Activated CD4-positive, alpha-beta memory T cell treated with anti-CD3 and anti-CD28 coated beads for 36 hours (primary cell): ENCODE measurements at regions of chr6 and their contacts with region 1.

Region 1: GRCh38 chr6:43053545-43054205 is at the start of gene CUL7:
- DNase-seq: peak; percentile 96
- H3K4me3 Mint-ChIP-seq: peak within 1 kb of the TSS; percentile 98
- H3K27ac Mint-ChIP-seq: peak within 1 kb of the TSS; percentile 95
- H3K4me1 Mint-ChIP-seq: peaks cover 44% of the 10 kb centered on the region
- H3K27me3 Mint-ChIP-seq: no peaks in the 10 kb centered on the region
- total RNA-seq, gene CUL7: 23.2 to 23.8 TPM

Region 2: GRCh38 chr6:42978839-42979522 is 74.7 kb before region 1 on chr6 and contains the start of gene PEX6:
- CTCF ChIA-PET with region 1: no interaction called
- POLR2A ChIA-PET with region 1: interaction called, 4 read pairs
- intact Hi-C with region 1: loop called (anchors 1 kb)
- DNase-seq: peak; percentile 97
- H3K4me3 Mint-ChIP-seq: peak within 1 kb of the TSS; percentile 94
- H3K27ac Mint-ChIP-seq: peak within 1 kb of the TSS; percentile 98
- H3K4me1 Mint-ChIP-seq: peaks cover 56% of the 10 kb centered on the region
- H3K27me3 Mint-ChIP-seq: no peaks in the 10 kb centered on the region
- total RNA-seq, gene PEX6: 25.6 to 26.4 TPM

Region 3: GRCh38 chr6:42984001-42984923 is 69.4 kb before region 1 on chr6 and contains the start of gene PPP2R5D:
- CTCF ChIA-PET with region 1: no interaction called
- POLR2A ChIA-PET with region 1: interaction called, 4 read pairs
- intact Hi-C with region 1: loop called (anchors 1 kb)
- DNase-seq: peak; percentile 99
- H3K4me3 Mint-ChIP-seq: peak within 1 kb of the TSS; percentile 85
- H3K27ac Mint-ChIP-seq: peak within 1 kb of the TSS; percentile 85
- H3K4me1 Mint-ChIP-seq: peaks cover 56% of the 10 kb centered on the region
- H3K27me3 Mint-ChIP-seq: no peaks in the 10 kb centered on the region
- total RNA-seq, gene PPP2R5D: 59.1 to 60.2 TPM

Region 4: GRCh38 chr6:43355862-43356590 is 302.4 kb after region 1 on chr6:
- CTCF ChIA-PET with region 1: no interaction called
- POLR2A ChIA-PET with region 1: no interaction called
- intact Hi-C with region 1: no loop called
- DNase-seq: no peak
- H3K4me3 Mint-ChIP-seq: no peak overlapping the region
- H3K27ac Mint-ChIP-seq: no peak overlapping the region
- H3K4me1 Mint-ChIP-seq: peaks cover 10% of the 10 kb centered on the region
- H3K27me3 Mint-ChIP-seq: no peaks in the 10 kb centered on the region